MCF 10A (cell line): ENCODE measurements at regions of chr6 and their contacts with region 1.

Region 1: GRCh38 chr6:79070206-79070825 is 7.7 kb downstream of the PHIP start:
- DNase-seq: no peak
- H3K4me3 Mint-ChIP-seq: no peak overlapping the region
- H3K27ac Mint-ChIP-seq: no peak overlapping the region
- H3K4me1 Mint-ChIP-seq: peaks cover 6% of the 10 kb centered on the region
- H3K27me3 Mint-ChIP-seq: no peaks in the 10 kb centered on the region
- CTCF ChIP-seq: no peak

Region 2: DNA sequence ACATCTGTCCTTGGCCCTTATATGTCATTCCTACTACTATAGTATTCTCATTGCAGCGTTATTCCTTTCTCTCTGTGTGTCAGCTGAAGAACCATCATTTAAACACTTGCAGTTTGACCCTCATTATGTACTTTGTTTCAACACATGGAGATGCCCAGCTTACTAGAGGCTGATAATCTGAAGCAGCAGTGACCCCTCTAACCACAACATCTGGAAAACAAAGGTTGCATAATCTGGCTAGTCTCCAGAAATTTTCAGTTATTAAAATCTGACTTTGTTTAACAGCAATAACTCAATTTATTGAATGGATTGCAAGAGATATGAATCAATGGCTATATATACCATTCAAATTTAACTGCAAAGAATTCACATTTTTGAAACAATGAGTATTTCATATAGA is 14.4 kb after region 1 on chr6:
- CTCF ChIA-PET with region 1: interaction called, 3 read pairs
- POLR2A ChIA-PET with region 1: interaction called, 79 read pairs
- intact Hi-C with region 1: no loop called
- DNase-seq: peak; percentile 14
- H3K4me3 Mint-ChIP-seq: no peak overlapping the region
- H3K27ac Mint-ChIP-seq: no peak overlapping the region
- H3K4me1 Mint-ChIP-seq: peaks cover 9% of the 10 kb centered on the region
- H3K27me3 Mint-ChIP-seq: no peaks in the 10 kb centered on the region
- CTCF ChIP-seq: no peak